Heart left ventricle (tissue), 16 donors: ENCODE measurements at regions of chr1 and their contacts with region 1.

Region 1: DNA sequence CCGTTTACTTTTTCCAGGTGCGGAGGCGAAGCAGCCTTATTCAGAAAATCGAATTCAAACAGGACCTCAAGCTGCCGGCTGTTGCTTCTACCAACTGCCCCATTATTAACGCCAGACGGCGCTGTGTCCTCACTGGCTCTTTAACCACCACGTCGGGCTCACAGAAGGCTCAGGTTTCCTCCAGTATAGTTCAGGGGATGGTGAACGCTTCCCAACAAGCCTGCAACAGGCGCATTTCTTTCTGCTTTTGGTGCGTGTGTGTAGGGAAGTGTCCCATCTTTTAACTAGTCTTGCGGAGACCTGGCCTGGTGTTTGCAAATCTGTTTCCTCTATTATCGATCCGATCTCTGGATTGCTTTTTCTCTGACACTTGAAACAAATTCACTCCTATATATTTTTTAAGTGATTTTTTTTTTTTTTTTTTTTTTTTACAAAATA is 791 bp upstream of the STUM start:
- DNase-seq: peak; percentile 78 to 87 (median 80)
- ATAC-seq: peak; percentile 51 to 80 (median 75)
- H3K4me3 ChIP-seq: peak overlapping the region in 6 of 12 donors; percentile 53 to 66 (median 62)
- H3K27ac ChIP-seq: peak overlapping the region in 1 of 12 donors; percentile 87
- H3K4me1 ChIP-seq: peaks cover 0 to 79% (median 29%) of the 10 kb centered on the region in 12 donors
- H3K27me3 ChIP-seq: peaks cover 0 to 27% (median 7%) of the 10 kb centered on the region in 9 donors
- CTCF ChIP-seq: peak; percentile 76 to 94 (median 83)
- POLR2A ChIP-seq: no peak

Region 2: DNA sequence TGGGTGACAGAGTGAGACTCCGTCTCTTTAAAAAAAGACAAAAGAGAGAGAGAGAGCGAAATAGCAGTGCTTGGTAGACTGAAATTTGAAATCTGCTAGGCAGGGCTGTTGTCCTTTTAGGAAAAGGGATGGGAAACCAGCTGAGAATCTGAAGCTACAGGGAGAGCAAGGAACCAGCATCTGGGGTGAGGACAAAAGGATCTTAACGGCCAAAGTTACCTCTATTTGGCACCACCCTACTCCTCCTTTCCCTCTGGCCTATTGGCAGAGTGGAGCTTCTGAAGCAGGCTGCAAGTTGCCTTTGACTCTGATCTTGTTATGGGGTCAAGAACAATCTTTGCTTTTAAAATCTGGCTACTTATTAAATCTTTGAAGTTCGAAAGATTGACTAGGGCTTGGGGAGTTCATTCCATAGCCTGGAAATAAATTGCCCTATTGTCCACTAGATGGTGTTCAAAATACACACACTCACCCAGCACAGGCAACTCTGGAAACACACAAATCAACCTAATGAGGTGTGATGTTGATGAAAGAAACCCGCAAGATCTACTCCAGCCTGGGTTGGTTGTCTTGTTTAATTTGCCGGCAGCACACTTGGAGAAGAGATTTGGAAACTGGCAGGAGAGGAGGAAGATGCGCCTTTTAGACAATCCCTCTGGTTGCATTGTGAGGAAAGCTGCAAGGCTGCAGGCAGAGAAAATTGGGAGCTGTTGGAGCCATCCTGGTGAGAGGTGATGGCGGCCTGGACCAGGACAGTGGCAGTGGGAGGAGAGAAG is 123.4 kb before region 1 on chr1:
- intact Hi-C with region 1: loop called in 5 of 10 experiments (anchors 10 kb)
- DNase-seq: no peak
- ATAC-seq: peak in 3 of 4 donors; percentile 71 to 84 (median 77)
- H3K4me3 ChIP-seq: no peak overlapping the region
- H3K27ac ChIP-seq: no peak overlapping the region
- H3K4me1 ChIP-seq: peaks cover 0 to 9% (median 0%) of the 10 kb centered on the region in 12 donors
- H3K27me3 ChIP-seq: no peaks in the 10 kb centered on the region
- CTCF ChIP-seq: peak; percentile 37 to 71 (median 61)
- POLR2A ChIP-seq: no peak

Region 3: DNA sequence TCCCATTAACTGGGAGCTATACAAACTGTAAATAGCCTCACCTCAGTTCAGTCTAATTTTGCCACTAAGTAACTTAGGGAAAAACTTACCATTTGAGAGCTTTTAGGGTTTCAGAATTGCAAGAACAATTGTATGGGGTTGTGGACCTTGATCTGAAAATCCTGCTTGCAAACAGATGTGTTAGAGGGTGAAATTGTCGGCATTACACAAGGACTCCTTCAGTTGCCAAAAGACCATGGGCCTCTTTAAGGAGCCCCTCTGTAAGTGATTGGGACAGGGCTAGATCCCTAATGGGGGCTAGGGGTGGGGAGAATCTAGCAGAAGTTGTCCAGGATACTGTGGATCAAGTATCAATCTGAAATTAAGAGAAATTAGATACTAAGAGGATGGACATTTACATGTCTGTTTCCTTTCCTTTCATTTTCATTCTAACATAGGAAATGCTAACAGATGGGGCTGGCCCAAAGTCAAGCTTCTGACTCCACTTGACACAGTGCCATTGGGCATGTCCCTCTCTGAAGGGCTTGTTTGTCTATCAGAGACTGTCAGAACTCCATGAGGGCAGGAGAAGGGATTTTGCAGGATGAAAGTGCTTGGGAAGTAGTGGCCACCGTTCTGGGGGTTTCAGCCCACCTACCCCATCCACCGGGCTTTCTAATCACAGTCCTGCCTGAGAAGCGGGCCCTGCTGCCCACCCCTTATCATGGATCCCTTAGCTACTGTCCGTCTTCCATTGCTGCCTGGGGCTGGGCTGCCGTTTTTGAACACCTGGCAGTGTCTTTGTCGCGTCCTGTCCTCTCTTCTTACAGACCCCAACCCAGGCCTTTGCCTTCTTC is 55.5 kb after region 1 on chr1:
- intact Hi-C with region 1: loop called (anchors 2 to 5 kb)
- DNase-seq: peak in 4 of 5 donors; percentile 71 to 80 (median 72)
- ATAC-seq: peak in 3 of 4 donors; percentile 50 to 75 (median 69)
- H3K4me3 ChIP-seq: peak overlapping the region in 8 of 12 donors; percentile 3 to 46 (median 23)
- H3K27ac ChIP-seq: peak overlapping the region in 11 of 12 donors; percentile 46 to 83 (median 70)
- H3K4me1 ChIP-seq: peaks cover 0 to 46% (median 27%) of the 10 kb centered on the region in 12 donors
- H3K27me3 ChIP-seq: no peaks in the 10 kb centered on the region
- CTCF ChIP-seq: no peak
- POLR2A ChIP-seq: no peak

Region 4: GRCh38 chr1:226626577-226626956 is 78.8 kb after region 1 on chr1:
- intact Hi-C with region 1: loop called in 1 of 10 experiments (anchors 5 kb)
- DNase-seq: peak; percentile 75 to 83 (median 76)
- ATAC-seq: peak; percentile 80 to 90 (median 88)
- H3K4me3 ChIP-seq: no peak overlapping the region
- H3K27ac ChIP-seq: peak overlapping the region in 1 of 12 donors; percentile 32
- H3K4me1 ChIP-seq: peaks cover 0 to 10% (median 6%) of the 10 kb centered on the region in 12 donors
- H3K27me3 ChIP-seq: no peaks in the 10 kb centered on the region
- CTCF ChIP-seq: peak; percentile 94 to 99 (median 97)
- POLR2A ChIP-seq: no peak

Region 5: DNA sequence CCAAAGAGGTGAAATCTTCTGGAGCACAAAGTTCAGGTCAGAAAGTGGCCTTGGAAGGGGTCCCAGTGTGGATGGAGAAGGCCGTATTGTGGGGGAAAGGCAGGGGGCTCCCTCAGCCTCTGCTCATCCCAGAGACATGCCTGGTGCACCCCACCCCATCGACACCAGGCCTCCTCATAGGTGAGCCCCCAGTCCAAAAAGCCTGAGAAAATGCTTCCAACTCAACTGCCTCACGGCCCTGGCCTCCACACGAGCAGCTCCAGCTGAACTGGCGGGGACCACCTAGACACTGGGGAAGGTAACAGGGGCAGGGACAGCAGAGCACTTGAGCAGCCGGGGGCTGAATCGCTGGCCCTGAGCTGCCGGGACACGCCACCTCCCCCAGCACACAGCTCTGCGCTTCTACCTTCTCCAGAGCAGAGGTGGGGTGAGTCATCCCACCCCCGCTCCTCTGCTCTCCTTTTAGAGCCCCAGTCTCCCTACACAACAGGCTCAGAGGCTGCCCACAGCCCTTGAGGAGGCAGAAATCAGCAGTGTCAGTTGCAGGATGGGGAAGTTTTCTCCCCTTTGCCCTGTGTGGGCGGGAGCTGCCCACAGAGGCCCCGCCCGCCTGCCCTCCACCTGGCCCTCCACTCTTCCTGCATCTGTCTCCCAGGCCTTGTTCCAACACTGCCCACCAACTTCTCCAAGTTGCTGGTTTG is 95.3 kb after region 1 on chr1:
- intact Hi-C with region 1: no loop called
- DNase-seq: peak in 3 of 5 donors; percentile 26 to 42 (median 30)
- ATAC-seq: peak in 2 of 4 donors; percentile 13 to 30
- H3K4me3 ChIP-seq: no peak overlapping the region
- H3K27ac ChIP-seq: peak overlapping the region in 3 of 12 donors; percentile 5 to 81 (median 69)
- H3K4me1 ChIP-seq: peaks cover 0 to 53% (median 30%) of the 10 kb centered on the region in 12 donors
- H3K27me3 ChIP-seq: no peaks in the 10 kb centered on the region
- CTCF ChIP-seq: no peak
- POLR2A ChIP-seq: no peak

Region 6: GRCh38 chr1:226664413-226665101 is 116.8 kb after region 1 on chr1:
- intact Hi-C with region 1: no loop called
- DNase-seq: peak; percentile 67 to 81 (median 74)
- ATAC-seq: peak; percentile 36 to 67 (median 53)
- H3K4me3 ChIP-seq: peak overlapping the region in 3 of 12 donors; percentile 12 to 29 (median 13)
- H3K27ac ChIP-seq: peak overlapping the region in 10 of 12 donors; percentile 73 to 95 (median 89)
- H3K4me1 ChIP-seq: peaks cover 0 to 98% (median 85%) of the 10 kb centered on the region in 12 donors
- H3K27me3 ChIP-seq: no peaks in the 10 kb centered on the region
- CTCF ChIP-seq: no peak
- POLR2A ChIP-seq: peak in 1 of 2 donors; percentile 34

Region 7: GRCh38 chr1:226875641-226876295 is 328.0 kb after region 1 on chr1:
- intact Hi-C with region 1: no loop called
- DNase-seq: no peak
- ATAC-seq: peak in 1 of 4 donors; percentile 33
- H3K4me3 ChIP-seq: no peak overlapping the region
- H3K27ac ChIP-seq: no peak overlapping the region
- H3K4me1 ChIP-seq: peaks cover 5 to 32% (median 19%) of the 10 kb centered on the region in 12 donors
- H3K27me3 ChIP-seq: no peaks in the 10 kb centered on the region
- CTCF ChIP-seq: no peak
- POLR2A ChIP-seq: no peak

Region 8: GRCh38 chr1:227449051-227449450 is 901.3 kb after region 1 on chr1:
- intact Hi-C with region 1: loop called in 1 of 10 experiments (anchors 10 kb)
- DNase-seq: no peak
- ATAC-seq: peak in 2 of 4 donors; percentile 14 to 24
- H3K4me3 ChIP-seq: no peak overlapping the region
- H3K27ac ChIP-seq: no peak overlapping the region
- H3K4me1 ChIP-seq: peaks cover 0 to 11% (median 2%) of the 10 kb centered on the region in 12 donors
- H3K27me3 ChIP-seq: peaks cover 0 to 14% (median 0%) of the 10 kb centered on the region in 9 donors
- CTCF ChIP-seq: peak in 11 of 12 donors; percentile 14 to 50 (median 32)
- POLR2A ChIP-seq: no peak